ENCODE measurements at regions of chr5 and their contacts with region 1.

Region 1: GRCh38 chr5:92309336-92309991 is 926.3 kb upstream of the ARRDC3 start:
- DNase-seq: peak; percentile 31
- H3K4me3 ChIP-seq: no peak overlapping the region
- H3K27ac ChIP-seq: no peak overlapping the region
- H3K4me1 ChIP-seq: no peaks in the 10 kb centered on the region
- H3K27me3 ChIP-seq: no peaks in the 10 kb centered on the region
- CTCF ChIP-seq: peak in 1 of 2 donors; percentile 24
- POLR2A ChIP-seq: no peak

Region 2: DNA sequence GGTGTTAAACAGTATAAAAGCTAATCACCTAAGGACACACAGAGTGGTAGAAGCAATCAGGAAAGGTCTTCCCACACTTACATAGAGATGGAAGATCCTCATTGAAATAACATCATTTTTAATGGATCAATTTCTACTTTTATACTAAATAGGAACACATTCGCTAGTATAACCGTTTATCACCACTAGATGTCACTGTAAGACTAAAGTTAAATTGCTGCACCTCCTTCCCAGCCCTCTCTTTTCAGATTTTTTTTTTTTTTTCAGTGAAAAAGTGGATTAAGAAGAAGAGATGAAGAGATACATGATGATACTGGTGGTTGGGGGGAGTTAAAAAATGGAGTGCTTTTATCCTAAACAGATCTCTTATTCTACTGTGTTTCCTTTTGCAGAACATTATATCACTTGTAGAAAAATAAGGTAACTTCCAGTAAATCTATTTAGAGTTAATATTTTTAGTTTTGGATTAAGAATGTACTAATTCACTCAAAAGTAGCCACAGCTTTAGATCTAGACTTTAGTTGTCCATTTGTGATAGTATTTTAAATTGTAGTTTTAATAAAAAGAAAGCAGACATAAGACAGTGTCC is 809.4 kb before region 1 on chr5:
- CTCF ChIA-PET with region 1: no interaction called
- POLR2A ChIA-PET with region 1: no interaction called
- dilution Hi-C with region 1: no loop called
- intact Hi-C with region 1: loop called (anchors 10 kb)
- DNase-seq: peak; percentile 54
- H3K4me3 ChIP-seq: no peak overlapping the region
- H3K27ac ChIP-seq: no peak overlapping the region
- H3K4me1 ChIP-seq: no peaks in the 10 kb centered on the region
- H3K27me3 ChIP-seq: peaks cover 0 to 5% of the 10 kb centered on the region in 2 experiments
- CTCF ChIP-seq: peak; percentile 28 to 30
- POLR2A ChIP-seq: no peak

Region 3: GRCh38 chr5:92081958-92082712 is 227.3 kb before region 1 on chr5:
- CTCF ChIA-PET with region 1: no interaction called
- POLR2A ChIA-PET with region 1: no interaction called
- dilution Hi-C with region 1: no loop called
- intact Hi-C with region 1: no loop called
- DNase-seq: no peak
- H3K4me3 ChIP-seq: no peak overlapping the region
- H3K27ac ChIP-seq: no peak overlapping the region
- H3K4me1 ChIP-seq: no peaks in the 10 kb centered on the region
- H3K27me3 ChIP-seq: no peaks in the 10 kb centered on the region
- CTCF ChIP-seq: no peak
- POLR2A ChIP-seq: no peak